ENCODE measurements at regions of chr14 and their contacts with region 1.

Region 1: DNA sequence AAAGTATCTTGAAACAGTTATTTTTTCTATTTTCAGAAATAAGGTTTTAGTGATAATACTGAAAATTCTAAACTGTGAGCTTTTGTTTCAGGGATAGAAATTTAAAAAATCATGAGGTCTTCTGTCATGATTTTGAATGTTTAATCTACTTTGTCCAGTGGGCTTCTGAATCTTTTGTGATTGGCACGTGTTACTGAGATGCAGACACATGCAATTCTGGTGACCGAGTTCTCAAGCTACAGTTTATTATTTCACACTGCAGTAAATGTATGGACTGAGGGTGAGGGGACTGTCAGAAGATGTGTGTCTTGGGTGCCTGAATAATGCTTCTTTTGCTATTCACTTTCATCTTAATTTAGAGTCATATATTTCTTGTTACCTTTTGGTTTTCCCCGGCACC is 778.7 kb downstream of the DIO2 start:
- DNase-seq: no peak
- H3K4me3 ChIP-seq: no peak overlapping the region
- CTCF ChIP-seq: no peak

Region 2: GRCh38 chr14:78220273-78220672 is 1212.4 kb before region 1 on chr14:
- in situ Hi-C with region 1: no loop called
- DNase-seq: no peak
- H3K4me3 ChIP-seq: no peak overlapping the region
- CTCF ChIP-seq: no peak

Region 3: GRCh38 chr14:79375356-79375755 is 57.3 kb before region 1 on chr14:
- in situ Hi-C with region 1: loop called (anchors 5 kb)
- DNase-seq: no peak
- H3K4me3 ChIP-seq: no peak overlapping the region
- CTCF ChIP-seq: no peak

Region 4: GRCh38 chr14:79395061-79395460 is 37.6 kb before region 1 on chr14:
- in situ Hi-C with region 1: no loop called
- DNase-seq: no peak
- H3K4me3 ChIP-seq: no peak overlapping the region
- CTCF ChIP-seq: no peak